CD4-positive, alpha-beta T cell (primary cell): ENCODE measurements at regions of chr1 and their contacts with region 1.

Region 1: GRCh38 chr1:27357281-27358037 is 9.3 kb downstream of the MAP3K6 start:
- DNase-seq: peak; percentile 70 to 92 (median 80)
- ATAC-seq: peak; percentile 87
- H3K4me3 ChIP-seq: peak overlapping the region; percentile 57
- H3K4me3 Mint-ChIP-seq: peak overlapping the region; percentile 83
- H3K27ac ChIP-seq: peak overlapping the region in 1 of 2 donors; percentile 31
- H3K27ac Mint-ChIP-seq: peak overlapping the region; percentile 75
- H3K4me1 ChIP-seq: peaks cover 61% of the 10 kb centered on the region
- H3K4me1 Mint-ChIP-seq: peaks cover 47% of the 10 kb centered on the region
- H3K27me3 ChIP-seq: no peaks in the 10 kb centered on the region
- H3K27me3 Mint-ChIP-seq: no peaks in the 10 kb centered on the region
- CTCF ChIP-seq: peak; percentile 98

Region 2: DNA sequence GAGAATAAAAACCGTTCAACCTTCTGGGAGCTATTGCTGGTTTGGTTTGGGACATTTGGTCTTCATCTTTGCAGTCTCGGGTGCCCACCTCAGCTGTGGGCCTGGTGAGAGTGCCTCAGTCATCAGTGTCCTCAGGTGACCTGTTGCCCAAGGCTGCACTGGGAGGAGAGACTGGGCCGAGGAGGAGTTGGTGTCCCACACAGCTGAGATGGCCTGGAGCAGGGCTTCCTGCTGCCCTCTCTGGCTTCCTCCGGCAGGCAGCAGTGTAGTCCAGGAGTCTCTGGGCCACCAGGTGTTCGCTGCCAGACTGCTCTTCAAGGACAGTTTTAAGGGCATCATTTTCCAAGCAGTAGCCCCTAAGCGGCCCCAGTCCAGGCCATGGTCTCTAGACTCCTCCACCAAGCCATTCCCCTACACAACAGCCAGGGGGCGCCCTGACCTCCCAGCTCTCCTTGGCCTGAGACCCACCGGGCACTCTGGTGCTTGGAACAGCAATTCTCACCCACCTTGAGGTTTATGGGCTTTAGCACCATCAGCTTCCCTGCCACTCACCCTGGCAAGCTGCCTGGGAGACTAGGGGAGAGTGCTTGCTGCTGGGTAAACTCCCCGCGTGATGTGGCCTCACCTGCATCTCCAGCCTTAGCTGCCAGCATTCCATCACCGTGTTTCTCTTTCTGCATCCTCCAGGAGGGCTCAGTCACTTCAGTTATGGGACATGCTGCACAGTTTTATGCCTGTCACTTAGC is 24.8 kb before region 1 on chr1:
- CTCF ChIA-PET with region 1: interaction called, 12 read pairs
- POLR2A ChIA-PET with region 1: interaction called, 12 read pairs
- intact Hi-C with region 1: no loop called
- DNase-seq: peak; percentile 37 to 81 (median 53)
- ATAC-seq: peak; percentile 87
- H3K4me3 ChIP-seq: no peak overlapping the region
- H3K4me3 Mint-ChIP-seq: peak overlapping the region; percentile 56
- H3K27ac ChIP-seq: no peak overlapping the region
- H3K27ac Mint-ChIP-seq: no peak overlapping the region
- H3K4me1 ChIP-seq: peaks cover 32% of the 10 kb centered on the region
- H3K4me1 Mint-ChIP-seq: peaks cover 29% of the 10 kb centered on the region
- H3K27me3 ChIP-seq: no peaks in the 10 kb centered on the region
- H3K27me3 Mint-ChIP-seq: no peaks in the 10 kb centered on the region
- CTCF ChIP-seq: peak; percentile 82

Region 3: DNA sequence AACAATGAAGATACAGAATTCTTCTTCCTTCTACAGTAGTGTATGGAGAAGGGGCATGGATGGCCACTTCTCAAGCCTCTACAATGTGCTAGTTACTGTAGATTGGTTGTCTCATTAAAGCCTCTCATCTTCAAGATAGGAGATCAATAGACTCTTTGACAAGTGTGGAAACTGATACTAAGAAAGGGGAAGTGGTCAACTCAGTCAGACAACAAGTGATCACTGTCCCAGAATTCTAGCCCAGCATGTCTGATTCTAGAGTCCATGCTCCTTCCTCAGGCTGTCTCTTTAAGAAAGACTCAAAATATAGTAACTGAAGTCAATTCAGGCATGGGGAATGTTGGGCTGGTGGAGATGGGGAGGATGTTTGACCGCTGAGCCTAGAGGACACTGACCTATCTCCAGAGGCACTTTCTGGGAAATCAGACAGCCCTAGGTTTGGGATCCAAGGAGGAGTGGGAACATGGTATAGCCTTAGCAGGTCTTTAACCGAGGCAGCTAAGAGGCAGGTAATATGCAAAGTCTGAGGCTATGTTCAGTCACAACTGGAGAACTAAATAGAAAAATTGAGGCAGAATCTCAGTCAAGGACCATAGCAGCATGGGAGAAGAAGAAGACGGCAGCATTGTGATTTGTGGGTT is 770.3 kb after region 1 on chr1:
- CTCF ChIA-PET with region 1: no interaction called
- POLR2A ChIA-PET with region 1: no interaction called
- intact Hi-C with region 1: no loop called
- DNase-seq: peak in 1 of 14 experiments; percentile 26
- ATAC-seq: no peak
- H3K4me3 ChIP-seq: no peak overlapping the region
- H3K4me3 Mint-ChIP-seq: no peak overlapping the region
- H3K27ac ChIP-seq: no peak overlapping the region
- H3K27ac Mint-ChIP-seq: no peak overlapping the region
- H3K4me1 ChIP-seq: peaks cover 2% of the 10 kb centered on the region
- H3K4me1 Mint-ChIP-seq: no peaks in the 10 kb centered on the region
- H3K27me3 ChIP-seq: peaks cover 0 to 4% of the 10 kb centered on the region in 2 experiments
- H3K27me3 Mint-ChIP-seq: peaks cover 19% of the 10 kb centered on the region
- CTCF ChIP-seq: no peak